ENCODE measurements at regions of chr1 and their contacts with region 1.

Region 1: DNA sequence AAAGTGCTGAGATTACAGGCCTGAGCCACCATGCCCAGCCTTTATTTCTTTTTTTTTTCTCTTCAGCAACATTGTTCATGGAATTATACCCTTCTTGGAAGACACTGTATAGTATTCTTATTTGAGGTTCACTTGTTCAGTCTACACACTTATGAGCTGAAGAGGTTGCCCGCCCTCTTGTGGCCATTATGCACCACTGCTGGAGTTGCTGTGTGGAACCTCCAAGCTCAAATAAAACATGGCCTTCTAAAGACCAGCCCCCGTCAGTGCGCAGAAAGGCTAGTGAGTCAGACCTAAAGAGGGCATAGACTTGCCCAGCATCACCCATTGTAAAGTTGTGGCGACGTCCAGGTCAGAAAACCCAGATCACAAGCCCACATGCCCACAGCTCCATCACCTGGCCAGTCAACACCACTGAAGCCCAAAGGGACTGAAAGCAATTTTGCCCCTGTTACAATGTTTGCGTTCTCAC is 20.4 kb downstream of the LURAP1 start:
- DNase-seq: peak; percentile 16 to 64 (median 24)
- H3K4me3 ChIP-seq: no peak overlapping the region
- H3K4me3 Mint-ChIP-seq: no peak overlapping the region
- H3K27ac ChIP-seq: no peak overlapping the region
- H3K27ac Mint-ChIP-seq: no peak overlapping the region
- H3K4me1 ChIP-seq: peaks cover 3% of the 10 kb centered on the region
- H3K4me1 Mint-ChIP-seq: peaks cover 3 to 6% (median 4%) of the 10 kb centered on the region in 3 donors
- H3K27me3 ChIP-seq: no peaks in the 10 kb centered on the region
- H3K27me3 Mint-ChIP-seq: peaks cover 0 to 2% of the 10 kb centered on the region in 2 donors

Region 2: DNA sequence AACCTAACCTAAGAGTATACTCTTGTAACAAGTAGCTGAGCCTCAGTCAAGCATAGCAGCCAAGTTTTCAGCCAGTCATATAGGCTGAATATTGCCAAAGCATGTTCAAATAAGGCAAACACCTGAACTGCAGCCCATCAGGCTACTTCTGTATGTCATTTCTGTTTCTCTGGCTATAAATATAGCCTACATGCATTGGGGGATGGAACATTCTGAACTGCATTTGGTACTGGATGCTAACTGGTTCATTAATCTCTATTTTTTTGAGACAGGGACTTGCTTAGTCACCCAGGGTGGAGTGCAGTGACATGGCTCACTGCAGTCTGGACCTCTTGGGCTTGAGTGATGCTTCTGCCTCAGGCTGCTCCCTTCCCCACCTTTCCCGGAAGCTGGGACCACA is 382.8 kb before region 1 on chr1:
- CTCF ChIA-PET with region 1: no interaction called
- POLR2A ChIA-PET with region 1: no interaction called
- DNase-seq: no peak
- H3K4me3 ChIP-seq: no peak overlapping the region
- H3K4me3 Mint-ChIP-seq: no peak overlapping the region
- H3K27ac ChIP-seq: no peak overlapping the region
- H3K27ac Mint-ChIP-seq: no peak overlapping the region
- H3K4me1 ChIP-seq: no peaks in the 10 kb centered on the region
- H3K4me1 Mint-ChIP-seq: peaks cover 4 to 8% (median 7%) of the 10 kb centered on the region in 3 donors
- H3K27me3 ChIP-seq: no peaks in the 10 kb centered on the region
- H3K27me3 Mint-ChIP-seq: no peaks in the 10 kb centered on the region

Region 3: GRCh38 chr1:46036894-46037839 is 186.3 kb before region 1 on chr1:
- CTCF ChIA-PET with region 1: interaction called, 13 read pairs
- POLR2A ChIA-PET with region 1: no interaction called
- DNase-seq: peak; percentile 67 to 86 (median 77)
- H3K4me3 ChIP-seq: no peak overlapping the region
- H3K4me3 Mint-ChIP-seq: no peak overlapping the region
- H3K27ac ChIP-seq: no peak overlapping the region
- H3K27ac Mint-ChIP-seq: no peak overlapping the region
- H3K4me1 ChIP-seq: peaks cover 6% of the 10 kb centered on the region
- H3K4me1 Mint-ChIP-seq: no peaks in the 10 kb centered on the region
- H3K27me3 ChIP-seq: no peaks in the 10 kb centered on the region
- H3K27me3 Mint-ChIP-seq: no peaks in the 10 kb centered on the region

Region 4: GRCh38 chr1:46179138-46180081 is 44.1 kb before region 1 on chr1:
- CTCF ChIA-PET with region 1: interaction called, 11 read pairs
- POLR2A ChIA-PET with region 1: no interaction called
- DNase-seq: peak; percentile 42 to 76 (median 53)
- H3K4me3 ChIP-seq: no peak overlapping the region
- H3K4me3 Mint-ChIP-seq: no peak overlapping the region
- H3K27ac ChIP-seq: no peak overlapping the region
- H3K27ac Mint-ChIP-seq: no peak overlapping the region
- H3K4me1 ChIP-seq: peaks cover 2% of the 10 kb centered on the region
- H3K4me1 Mint-ChIP-seq: peaks cover 5 to 6% (median 5%) of the 10 kb centered on the region in 3 donors
- H3K27me3 ChIP-seq: no peaks in the 10 kb centered on the region
- H3K27me3 Mint-ChIP-seq: no peaks in the 10 kb centered on the region

Region 5: DNA sequence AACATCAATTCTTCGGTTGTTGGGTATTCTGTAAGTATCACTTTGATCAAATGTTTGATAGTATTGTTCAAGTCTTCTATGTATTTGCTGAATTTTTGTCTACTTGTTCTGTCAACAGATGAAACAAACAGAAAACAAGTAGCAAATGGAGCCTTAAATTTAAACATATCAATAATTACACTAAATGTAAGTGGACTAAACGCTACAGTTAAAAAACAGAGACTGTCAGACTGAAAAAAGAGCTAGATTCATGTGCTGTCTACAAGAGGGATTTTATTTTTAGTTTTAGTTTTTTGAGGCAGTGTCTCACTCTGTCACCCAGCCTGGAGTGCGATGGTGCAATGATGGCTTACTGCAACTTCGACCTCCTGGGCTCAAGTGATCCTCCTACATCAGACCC is 13.4 kb after region 1 on chr1:
- CTCF ChIA-PET with region 1: interaction called, 16 read pairs
- POLR2A ChIA-PET with region 1: no interaction called
- DNase-seq: no peak
- H3K4me3 ChIP-seq: no peak overlapping the region
- H3K4me3 Mint-ChIP-seq: no peak overlapping the region
- H3K27ac ChIP-seq: no peak overlapping the region
- H3K27ac Mint-ChIP-seq: no peak overlapping the region
- H3K4me1 ChIP-seq: no peaks in the 10 kb centered on the region
- H3K4me1 Mint-ChIP-seq: no peaks in the 10 kb centered on the region
- H3K27me3 ChIP-seq: no peaks in the 10 kb centered on the region
- H3K27me3 Mint-ChIP-seq: peaks cover 2% of the 10 kb centered on the region in 2 donors

Region 6: GRCh38 chr1:46254668-46255067 is 31.2 kb after region 1 on chr1:
- CTCF ChIA-PET with region 1: no interaction called
- POLR2A ChIA-PET with region 1: no interaction called
- DNase-seq: no peak
- H3K4me3 ChIP-seq: no peak overlapping the region
- H3K4me3 Mint-ChIP-seq: no peak overlapping the region
- H3K27ac ChIP-seq: no peak overlapping the region
- H3K27ac Mint-ChIP-seq: peak overlapping the region in 2 of 8 donors; percentile 70 to 76
- H3K4me1 ChIP-seq: no peaks in the 10 kb centered on the region
- H3K4me1 Mint-ChIP-seq: no peaks in the 10 kb centered on the region
- H3K27me3 ChIP-seq: no peaks in the 10 kb centered on the region
- H3K27me3 Mint-ChIP-seq: peaks cover 0 to under 1% of the 10 kb centered on the region in 2 donors

Region 7: DNA sequence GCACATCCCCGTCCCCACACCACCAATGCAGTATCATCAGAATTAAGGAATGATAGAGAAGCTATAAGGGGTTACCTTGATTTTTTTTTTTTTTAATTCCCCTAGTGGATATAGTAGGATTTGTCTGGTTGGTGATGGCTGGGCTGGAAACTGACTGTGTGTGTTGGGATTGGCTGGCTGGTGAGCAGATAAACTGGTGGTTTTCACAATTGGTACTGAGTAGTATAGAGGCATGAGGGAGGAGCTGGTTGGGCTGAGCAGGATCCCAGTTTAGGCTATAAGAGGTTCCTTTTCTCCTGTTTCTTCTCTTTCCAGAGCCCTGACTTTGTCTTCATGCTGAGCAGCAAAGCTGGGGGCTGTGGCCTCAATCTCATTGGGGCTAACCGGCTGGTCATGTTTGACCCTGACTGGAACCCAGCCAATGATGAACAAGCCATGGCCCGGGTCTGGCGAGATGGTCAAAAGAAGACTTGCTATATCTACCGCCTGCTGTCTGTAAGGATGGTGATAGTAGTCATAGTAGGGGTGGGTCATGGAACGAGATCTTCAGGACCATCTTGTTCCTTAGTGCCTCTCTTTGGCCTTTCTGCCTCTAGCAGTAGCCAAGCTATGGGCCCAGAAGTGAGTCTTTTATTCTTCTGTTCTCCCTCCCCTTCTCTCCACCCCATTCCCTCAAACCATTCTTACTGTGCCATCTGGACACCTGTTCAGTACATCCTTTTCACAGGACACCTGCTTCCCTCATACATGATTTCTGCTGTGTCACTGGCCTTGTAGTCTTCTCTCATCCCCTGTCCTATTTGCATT is 50.9 kb after region 1 on chr1:
- CTCF ChIA-PET with region 1: no interaction called
- POLR2A ChIA-PET with region 1: no interaction called
- DNase-seq: no peak
- H3K4me3 ChIP-seq: no peak overlapping the region
- H3K4me3 Mint-ChIP-seq: no peak overlapping the region
- H3K27ac ChIP-seq: no peak overlapping the region
- H3K27ac Mint-ChIP-seq: peak overlapping the region in 2 of 8 donors; percentile 30 to 39
- H3K4me1 ChIP-seq: no peaks in the 10 kb centered on the region
- H3K4me1 Mint-ChIP-seq: no peaks in the 10 kb centered on the region
- H3K27me3 ChIP-seq: no peaks in the 10 kb centered on the region
- H3K27me3 Mint-ChIP-seq: no peaks in the 10 kb centered on the region

Region 8: GRCh38 chr1:46315669-46316403 is 92.3 kb after region 1 on chr1:
- CTCF ChIA-PET with region 1: no interaction called
- POLR2A ChIA-PET with region 1: no interaction called
- DNase-seq: no peak
- H3K4me3 ChIP-seq: no peak overlapping the region
- H3K4me3 Mint-ChIP-seq: no peak overlapping the region
- H3K27ac ChIP-seq: no peak overlapping the region
- H3K27ac Mint-ChIP-seq: no peak overlapping the region
- H3K4me1 ChIP-seq: no peaks in the 10 kb centered on the region
- H3K4me1 Mint-ChIP-seq: no peaks in the 10 kb centered on the region
- H3K27me3 ChIP-seq: no peaks in the 10 kb centered on the region
- H3K27me3 Mint-ChIP-seq: no peaks in the 10 kb centered on the region

Measured in CD8-positive, alpha-beta memory T cell (primary cell).